Posterior cingulate gyrus (tissue), 11 donors: ENCODE measurements at regions of chr10 and their contacts with region 1.

Region 1: DNA sequence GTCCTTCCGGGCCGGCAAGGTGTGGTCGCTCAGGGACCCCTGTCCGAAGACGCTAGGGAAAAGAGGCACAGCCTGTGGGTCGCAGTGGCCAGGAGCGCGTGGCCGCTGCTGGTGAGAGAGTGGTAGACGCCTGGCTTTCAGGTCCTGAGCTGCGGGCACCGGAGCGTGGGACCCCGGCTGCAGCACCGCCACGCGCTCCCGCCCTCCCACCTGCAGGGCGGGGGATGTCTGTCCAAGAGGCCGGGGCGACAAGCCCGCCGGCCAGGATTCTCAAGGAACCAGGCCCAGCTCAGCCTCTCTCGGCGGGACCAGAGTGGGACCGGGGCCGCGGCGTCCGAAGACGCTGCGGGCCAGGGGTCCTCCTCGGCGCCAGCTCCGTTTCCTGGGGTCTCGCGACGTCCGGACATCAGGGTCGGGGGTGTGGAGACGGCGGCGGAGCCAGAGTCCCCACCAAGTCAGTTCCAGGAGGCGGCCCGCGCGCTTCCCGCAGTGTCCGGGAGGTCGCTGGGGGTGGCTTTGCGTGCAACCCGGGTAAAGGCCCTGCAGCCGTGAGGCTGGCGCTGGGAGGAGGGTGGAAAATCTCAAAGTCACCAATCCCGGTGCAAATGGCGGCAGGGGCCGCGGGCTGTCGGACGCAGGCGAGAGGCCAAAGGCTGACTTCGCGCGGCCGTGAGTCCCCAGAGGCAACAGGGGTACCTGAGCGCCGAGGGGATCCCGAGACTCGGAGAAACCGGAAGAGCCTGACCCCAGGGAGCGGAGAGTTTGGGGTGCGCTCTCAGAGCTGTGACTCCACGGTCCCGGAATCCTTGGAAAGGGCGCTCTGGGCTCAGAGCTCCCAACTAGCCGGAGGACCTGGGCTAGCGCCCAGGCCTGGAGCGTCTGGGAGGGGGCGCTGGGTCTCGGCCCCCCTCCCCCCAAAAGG is 5.4 kb downstream of the ZNF503 start:
- DNase-seq: peak in 1 of 10 donors; percentile 84

Region 2: GRCh38 chr10:76547352-76547972 is 1151.3 kb after region 1 on chr10:
- intact Hi-C with region 1: loop called (anchors 2 kb)
- DNase-seq: peak in 9 of 10 donors; percentile 30 to 90 (median 74)